Spleen (tissue), 13 donors: ENCODE measurements at regions of chr1 and their contacts with region 1.

Region 1: DNA sequence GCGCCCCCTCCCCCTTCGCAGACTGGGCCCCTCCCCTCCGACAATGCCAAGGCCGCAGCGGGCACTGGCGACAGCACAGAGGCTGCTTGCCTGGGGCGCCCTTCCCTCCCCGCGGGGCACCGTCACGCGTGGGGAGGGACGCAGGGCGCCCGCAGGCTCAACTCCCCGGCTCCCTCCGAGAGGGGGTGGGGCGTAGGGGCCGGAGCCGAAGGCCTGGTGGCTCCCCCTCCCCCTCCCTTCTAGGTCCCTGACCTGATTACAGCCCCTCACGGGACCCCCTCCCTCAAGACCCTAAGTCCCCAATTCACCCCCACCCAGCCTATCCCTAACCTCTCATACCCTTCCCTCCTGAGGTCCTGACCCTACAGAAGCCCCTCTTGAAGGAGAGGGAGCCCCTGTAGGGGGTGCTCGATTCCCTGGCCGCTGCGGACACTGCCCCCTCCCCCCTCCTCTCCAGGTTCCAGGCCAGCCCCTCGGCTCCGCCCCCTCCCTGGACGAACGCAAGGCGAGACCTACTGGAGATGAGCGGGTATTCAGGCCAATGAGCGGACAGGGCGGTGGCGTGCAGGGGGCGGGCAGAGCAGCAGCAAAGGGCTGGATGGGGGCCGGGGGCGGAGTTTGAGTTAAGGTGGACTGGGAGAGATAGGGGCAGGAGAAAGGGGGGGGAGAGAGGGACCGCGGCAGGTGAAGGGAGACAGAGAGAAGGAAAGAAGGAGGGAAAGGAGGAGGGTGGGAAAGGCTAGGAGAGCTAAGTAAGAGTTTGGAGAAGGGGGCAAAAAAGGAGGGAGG is 733 bp upstream of the ZBTB7B start:
- DNase-seq: peak; percentile 100
- H3K4me3 ChIP-seq: peak overlapping the region; percentile 71 to 90 (median 78)
- H3K27ac ChIP-seq: peak overlapping the region; percentile 89 to 99 (median 95)
- H3K4me1 ChIP-seq: peaks cover 42 to 91% (median 61%) of the 10 kb centered on the region in 6 donors
- H3K27me3 ChIP-seq: no peaks in the 10 kb centered on the region
- CTCF ChIP-seq: peak in 8 of 11 experiments; percentile 6 to 38 (median 36)
- POLR2A ChIP-seq: peak in 1 of 3 donors; percentile 1

Region 2: GRCh38 chr1:154961497-154962262 is 40.2 kb before region 1 on chr1 and contains the start of gene PYGO2:
- intact Hi-C with region 1: loop called (anchors 5 kb)
- DNase-seq: peak; percentile 96
- H3K4me3 ChIP-seq: peak within 1 kb of the TSS; percentile 80 to 97 (median 88)
- H3K27ac ChIP-seq: peak within 1 kb of the TSS; percentile 85 to 99 (median 98)
- H3K4me1 ChIP-seq: peaks cover 25 to 95% (median 58%) of the 10 kb centered on the region in 6 donors
- H3K27me3 ChIP-seq: no peaks in the 10 kb centered on the region
- CTCF ChIP-seq: peak; percentile 33 to 80 (median 69)
- POLR2A ChIP-seq: peak in 2 of 3 donors; percentile 59 to 81
- total RNA-seq, gene PYGO2: 28.4 to 36.6 (median 35.5) TPM

Region 3: GRCh38 chr1:155063550-155064110 is 61.8 kb after region 1 on chr1 and contains the start of gene EFNA4:
- intact Hi-C with region 1: loop called (anchors 10 kb)
- DNase-seq: peak; percentile 95
- H3K4me3 ChIP-seq: peak within 1 kb of the TSS; percentile 56 to 91 (median 76)
- H3K27ac ChIP-seq: peak within 1 kb of the TSS; percentile 72 to 93 (median 86)
- H3K4me1 ChIP-seq: peaks cover 29 to 54% (median 41%) of the 10 kb centered on the region in 6 donors
- H3K27me3 ChIP-seq: no peaks in the 10 kb centered on the region
- CTCF ChIP-seq: peak in 1 of 11 experiments; percentile 19
- POLR2A ChIP-seq: no peak
- total RNA-seq, gene EFNA4: 4.6 to 7.7 (median 6.0) TPM